B cell (primary cell): ENCODE measurements at regions of chr12 and their contacts with region 1.

Region 1: DNA sequence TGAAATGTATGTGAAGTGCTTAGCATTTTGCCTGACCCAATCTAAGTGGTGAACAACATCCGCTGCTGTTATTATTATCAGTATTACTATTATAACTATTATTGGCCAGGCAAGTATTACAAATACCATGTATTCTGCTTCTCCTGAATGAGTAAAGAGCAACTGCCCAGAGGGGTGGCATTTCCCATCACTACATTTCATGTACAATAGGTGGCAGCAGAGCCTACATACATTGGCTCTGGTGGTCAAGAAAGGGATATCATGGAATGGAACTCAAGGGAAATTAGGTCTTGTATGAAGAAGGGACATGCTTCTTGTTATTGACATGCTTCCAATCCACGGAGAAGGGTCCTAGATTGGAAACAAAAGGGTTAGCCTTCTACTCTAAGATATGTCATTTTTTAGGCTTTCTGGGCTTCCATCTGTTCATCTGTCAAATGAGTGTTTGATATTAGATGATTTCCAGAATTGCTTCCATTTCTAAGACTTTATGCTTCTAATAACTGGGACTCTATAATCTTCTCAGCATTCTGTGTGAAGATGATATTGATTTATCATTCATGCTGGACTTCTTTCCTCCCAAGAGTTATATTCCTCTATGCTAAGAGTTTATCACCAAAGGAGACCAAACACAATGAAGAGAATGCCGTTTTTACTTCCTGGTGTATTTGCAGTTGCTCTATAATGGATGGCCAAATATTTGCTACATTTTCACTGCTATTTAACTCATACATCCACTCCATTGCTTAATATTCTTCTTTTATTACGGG is 239.1 kb downstream of the SSPN start:
- DNase-seq: peak; percentile 61
- ATAC-seq: peak; percentile 61
- H3K4me3 ChIP-seq: no peak overlapping the region
- H3K4me3 Mint-ChIP-seq: no peak overlapping the region
- H3K27ac ChIP-seq: no peak overlapping the region
- H3K27ac Mint-ChIP-seq: peak overlapping the region; percentile 11
- H3K4me1 ChIP-seq: no peaks in the 10 kb centered on the region
- H3K4me1 Mint-ChIP-seq: no peaks in the 10 kb centered on the region
- H3K27me3 ChIP-seq: no peaks in the 10 kb centered on the region
- H3K27me3 Mint-ChIP-seq: no peaks in the 10 kb centered on the region
- CTCF ChIP-seq: peak; percentile 83

Region 2: DNA sequence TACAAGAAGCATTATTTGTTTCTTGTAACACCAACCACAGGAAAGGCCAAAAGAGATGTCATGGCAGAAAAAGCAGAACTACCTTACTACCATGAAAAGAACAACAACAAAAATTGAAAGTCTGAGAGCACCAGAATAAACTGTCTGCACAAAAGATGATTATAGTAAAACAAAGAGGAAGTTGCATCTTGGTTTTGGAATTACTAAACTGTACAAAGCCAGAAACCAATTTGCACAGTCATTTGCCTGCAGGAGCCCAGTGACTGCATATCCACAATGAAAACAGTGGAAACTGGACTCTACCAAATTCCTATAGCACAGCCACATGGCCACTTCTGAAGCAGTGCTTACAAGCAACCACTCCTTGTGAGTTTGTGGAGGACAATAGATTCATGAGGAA is 37.1 kb after region 1 on chr12:
- CTCF ChIA-PET with region 1: interaction called, 3 read pairs
- POLR2A ChIA-PET with region 1: no interaction called
- intact Hi-C with region 1: loop called (anchors 2 kb)
- DNase-seq: peak; percentile 69
- ATAC-seq: peak; percentile 70
- H3K4me3 ChIP-seq: peak overlapping the region in 1 of 5 experiments; percentile 8
- H3K4me3 Mint-ChIP-seq: peak overlapping the region; percentile 36
- H3K27ac ChIP-seq: peak overlapping the region; percentile 39 to 63
- H3K27ac Mint-ChIP-seq: peak overlapping the region; percentile 78
- H3K4me1 ChIP-seq: peaks cover 30 to 38% of the 10 kb centered on the region in 2 donors
- H3K4me1 Mint-ChIP-seq: peaks cover 47% of the 10 kb centered on the region
- H3K27me3 ChIP-seq: no peaks in the 10 kb centered on the region
- H3K27me3 Mint-ChIP-seq: no peaks in the 10 kb centered on the region
- CTCF ChIP-seq: no peak

Region 3: DNA sequence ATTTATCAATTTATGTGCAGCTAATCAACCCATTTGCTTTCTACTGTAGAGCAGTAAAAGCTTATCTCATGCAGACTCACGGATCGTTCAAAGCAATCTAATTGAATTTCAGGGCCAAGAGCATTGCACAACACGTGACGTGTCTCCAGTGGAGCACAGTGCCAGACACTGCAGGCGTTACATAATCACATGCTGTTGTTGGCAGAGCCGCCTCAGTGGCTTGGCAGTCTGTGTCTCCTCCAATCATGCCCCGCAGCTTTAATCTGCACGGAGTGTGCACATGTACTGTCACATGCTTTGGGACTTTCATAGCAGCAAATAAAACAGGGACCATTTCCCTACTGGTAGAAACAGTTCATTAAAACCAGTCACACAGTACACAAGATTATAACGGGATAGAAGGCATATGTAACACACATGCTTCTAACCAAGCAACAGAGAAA is 89.2 kb after region 1 on chr12:
- CTCF ChIA-PET with region 1: interaction called, 18 read pairs
- POLR2A ChIA-PET with region 1: no interaction called
- intact Hi-C with region 1: loop called (anchors 1 kb)
- DNase-seq: no peak
- ATAC-seq: no peak
- H3K4me3 ChIP-seq: no peak overlapping the region
- H3K4me3 Mint-ChIP-seq: no peak overlapping the region
- H3K27ac ChIP-seq: no peak overlapping the region
- H3K27ac Mint-ChIP-seq: no peak overlapping the region
- H3K4me1 ChIP-seq: peaks cover 5 to 6% of the 10 kb centered on the region in 2 donors
- H3K4me1 Mint-ChIP-seq: peaks cover 10% of the 10 kb centered on the region
- H3K27me3 ChIP-seq: no peaks in the 10 kb centered on the region
- H3K27me3 Mint-ChIP-seq: no peaks in the 10 kb centered on the region
- CTCF ChIP-seq: no peak

Region 4: DNA sequence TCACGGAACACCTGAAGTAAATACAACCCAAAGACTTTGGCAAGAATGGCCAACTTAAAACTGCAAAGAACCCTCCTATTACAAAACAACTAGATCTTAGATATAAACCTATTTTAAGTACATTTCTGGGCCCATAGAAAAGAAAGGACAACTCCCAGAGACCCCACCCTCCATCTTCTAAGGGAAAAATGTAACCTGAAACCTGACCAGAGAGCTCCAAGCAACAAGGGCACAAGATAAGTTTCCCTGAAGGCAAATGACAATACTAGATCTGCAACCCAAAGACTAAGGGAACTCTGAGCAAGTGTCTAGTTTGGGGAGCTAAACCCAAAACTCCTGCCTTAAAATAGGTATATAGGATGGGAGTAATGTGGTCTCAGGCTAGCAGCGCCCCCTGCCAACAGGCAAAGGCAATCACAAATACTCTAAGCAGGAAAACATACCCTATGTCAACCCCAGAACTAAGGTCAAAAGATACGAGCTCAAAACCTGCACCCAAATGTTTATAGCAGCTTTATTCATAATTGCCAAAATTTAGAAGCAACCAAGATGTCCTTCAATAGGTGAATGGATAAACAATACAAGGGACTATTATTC is 179.6 kb after region 1 on chr12:
- CTCF ChIA-PET with region 1: interaction called, 10 read pairs
- POLR2A ChIA-PET with region 1: no interaction called
- intact Hi-C with region 1: loop called (anchors 1 kb)
- DNase-seq: peak; percentile 51
- ATAC-seq: no peak
- H3K4me3 ChIP-seq: no peak overlapping the region
- H3K4me3 Mint-ChIP-seq: no peak overlapping the region
- H3K27ac ChIP-seq: no peak overlapping the region
- H3K27ac Mint-ChIP-seq: no peak overlapping the region
- H3K4me1 ChIP-seq: no peaks in the 10 kb centered on the region
- H3K4me1 Mint-ChIP-seq: no peaks in the 10 kb centered on the region
- H3K27me3 ChIP-seq: no peaks in the 10 kb centered on the region
- H3K27me3 Mint-ChIP-seq: no peaks in the 10 kb centered on the region
- CTCF ChIP-seq: peak; percentile 58

Region 5: GRCh38 chr12:26651566-26652188 is 217.2 kb after region 1 on chr12:
- CTCF ChIA-PET with region 1: interaction called, 6 read pairs
- POLR2A ChIA-PET with region 1: no interaction called
- intact Hi-C with region 1: loop called (anchors 1 kb)
- DNase-seq: peak; percentile 64
- ATAC-seq: peak; percentile 57
- H3K4me3 ChIP-seq: no peak overlapping the region
- H3K4me3 Mint-ChIP-seq: no peak overlapping the region
- H3K27ac ChIP-seq: no peak overlapping the region
- H3K27ac Mint-ChIP-seq: no peak overlapping the region
- H3K4me1 ChIP-seq: no peaks in the 10 kb centered on the region
- H3K4me1 Mint-ChIP-seq: no peaks in the 10 kb centered on the region
- H3K27me3 ChIP-seq: no peaks in the 10 kb centered on the region
- H3K27me3 Mint-ChIP-seq: no peaks in the 10 kb centered on the region
- CTCF ChIP-seq: peak; percentile 85